Activated CD8-positive, alpha-beta T cell treated with anti-CD3 and anti-CD28 coated beads for 36 hours (primary cell): ENCODE measurements at regions of chr14 and their contacts with region 1.

Region 1: GRCh38 chr14:20855652-20856291 is 35.4 kb upstream of the RNASE3 start:
- DNase-seq: peak; percentile 50
- ATAC-seq: peak; percentile 87
- H3K4me3 Mint-ChIP-seq: no peak overlapping the region
- H3K27ac Mint-ChIP-seq: no peak overlapping the region
- H3K4me1 Mint-ChIP-seq: no peaks in the 10 kb centered on the region
- H3K27me3 Mint-ChIP-seq: peaks cover 13% of the 10 kb centered on the region
- CTCF ChIP-seq: peak; percentile 68

Region 2: DNA sequence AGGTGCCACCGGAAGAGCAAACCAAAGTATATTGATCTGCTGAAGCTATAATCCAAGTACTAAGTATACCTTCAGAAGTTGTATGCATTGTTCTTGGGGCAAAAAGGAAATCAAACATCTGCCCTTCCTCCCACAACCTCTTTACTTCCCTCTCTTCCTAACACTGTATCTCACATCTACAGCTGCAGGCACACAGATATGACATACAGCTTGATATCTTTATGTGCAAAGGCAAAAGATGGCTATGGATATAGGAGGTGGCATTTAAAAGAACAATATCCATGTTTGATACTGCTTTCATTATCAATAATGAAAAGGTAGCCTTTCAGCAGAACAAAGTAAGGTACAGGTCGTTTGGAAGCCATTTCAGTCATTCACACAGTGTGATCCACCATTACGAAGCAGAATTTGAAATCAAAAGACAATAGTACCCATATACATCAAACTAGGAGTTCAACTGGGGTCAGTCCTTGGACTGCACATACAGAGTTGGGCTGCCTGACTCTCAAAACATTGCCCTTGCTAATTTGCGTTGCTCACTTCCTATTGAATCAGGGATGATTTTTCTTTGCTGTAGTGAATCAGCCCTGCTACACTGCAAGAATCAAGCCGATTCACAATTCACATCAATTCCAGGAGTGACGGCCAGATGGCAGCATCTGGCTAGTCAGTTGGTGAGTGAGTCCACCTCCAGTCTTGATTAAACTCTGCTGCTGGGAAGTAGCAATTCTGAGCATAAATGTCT is 158.3 kb before region 1 on chr14:
- CTCF ChIA-PET with region 1: interaction called, 40 read pairs
- POLR2A ChIA-PET with region 1: no interaction called
- intact Hi-C with region 1: loop called (anchors 1 kb)
- DNase-seq: peak; percentile 78
- ATAC-seq: peak; percentile 93
- H3K4me3 Mint-ChIP-seq: no peak overlapping the region
- H3K27ac Mint-ChIP-seq: no peak overlapping the region
- H3K4me1 Mint-ChIP-seq: peaks cover under 1% of the 10 kb centered on the region
- H3K27me3 Mint-ChIP-seq: peaks cover 4% of the 10 kb centered on the region
- CTCF ChIP-seq: peak; percentile 75

Region 3: DNA sequence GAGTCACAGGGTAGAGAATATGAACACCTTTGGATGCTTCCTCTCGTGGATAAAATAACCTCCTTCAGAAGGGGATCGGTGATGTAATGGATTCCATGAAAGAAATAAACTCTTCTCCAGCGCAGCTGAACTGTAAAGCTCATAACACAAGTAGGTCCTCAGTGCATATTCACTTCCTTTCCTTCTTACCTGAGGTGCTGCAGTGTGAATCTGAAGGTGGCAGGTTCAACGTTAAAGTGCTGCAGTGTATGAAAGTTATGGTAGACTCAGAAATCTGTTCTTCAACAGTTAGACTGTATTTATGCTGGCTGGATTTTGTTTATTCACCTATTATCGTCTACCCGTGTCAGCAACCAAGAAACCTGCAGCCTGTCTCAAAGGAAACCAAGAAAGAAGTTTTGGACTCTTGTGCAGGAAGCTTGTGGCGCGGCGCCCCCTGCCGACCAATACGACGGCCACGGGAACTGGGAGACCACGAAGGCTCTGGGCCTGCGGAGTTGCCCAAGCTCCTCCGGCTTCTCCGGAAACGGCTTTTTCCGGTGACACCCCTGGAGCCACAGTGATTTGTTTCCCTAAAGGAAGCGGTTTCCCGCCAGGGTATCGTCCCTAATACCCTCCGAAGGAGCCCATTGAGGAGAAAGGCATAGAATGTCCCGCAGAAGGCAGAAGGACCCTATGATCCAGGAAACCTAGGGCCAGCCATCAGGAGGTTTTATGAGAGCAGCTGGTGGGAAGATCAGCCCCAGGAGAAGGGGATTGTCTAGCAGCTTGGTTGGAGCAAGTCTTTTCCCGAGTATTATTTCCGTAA is 17.8 kb after region 1 on chr14:
- CTCF ChIA-PET with region 1: interaction called, 89 read pairs
- POLR2A ChIA-PET with region 1: no interaction called
- intact Hi-C with region 1: no loop called
- DNase-seq: peak; percentile 93
- ATAC-seq: peak; percentile 98
- H3K4me3 Mint-ChIP-seq: peak overlapping the region; percentile 41
- H3K27ac Mint-ChIP-seq: no peak overlapping the region
- H3K4me1 Mint-ChIP-seq: peaks cover 9% of the 10 kb centered on the region
- H3K27me3 Mint-ChIP-seq: peaks cover 4% of the 10 kb centered on the region
- CTCF ChIP-seq: peak; percentile 73

Region 4: DNA sequence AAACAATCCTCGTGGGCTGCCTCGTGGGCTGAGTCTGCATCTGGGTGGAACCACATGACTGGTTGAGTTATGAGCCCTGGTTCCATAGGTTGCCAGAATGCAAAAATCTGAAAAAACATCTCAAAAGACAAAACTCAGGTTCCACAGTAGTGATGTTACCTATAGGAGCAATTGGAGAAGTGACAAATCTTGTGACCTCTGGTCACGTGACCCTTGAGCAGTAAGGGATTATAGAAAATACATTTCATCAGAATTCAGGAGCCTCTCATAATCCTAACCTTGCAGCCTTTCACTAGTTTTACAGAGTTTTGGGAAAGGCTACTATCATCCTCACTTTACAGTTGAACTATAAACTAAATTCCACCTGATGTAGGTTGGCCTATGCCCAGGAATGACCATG is 22.9 kb after region 1 on chr14:
- CTCF ChIA-PET with region 1: interaction called, 89 read pairs
- POLR2A ChIA-PET with region 1: no interaction called
- intact Hi-C with region 1: no loop called
- DNase-seq: no peak
- ATAC-seq: no peak
- H3K4me3 Mint-ChIP-seq: no peak overlapping the region
- H3K27ac Mint-ChIP-seq: no peak overlapping the region
- H3K4me1 Mint-ChIP-seq: peaks cover 7% of the 10 kb centered on the region
- H3K27me3 Mint-ChIP-seq: no peaks in the 10 kb centered on the region
- CTCF ChIP-seq: no peak

Region 5: GRCh38 chr14:20956376-20956976 is 100.7 kb after region 1 on chr14:
- CTCF ChIA-PET with region 1: interaction called, 19 read pairs
- POLR2A ChIA-PET with region 1: no interaction called
- intact Hi-C with region 1: no loop called
- DNase-seq: no peak
- ATAC-seq: peak; percentile 17
- H3K4me3 Mint-ChIP-seq: no peak overlapping the region
- H3K27ac Mint-ChIP-seq: no peak overlapping the region
- H3K4me1 Mint-ChIP-seq: peaks cover 15% of the 10 kb centered on the region
- H3K27me3 Mint-ChIP-seq: peaks cover 17% of the 10 kb centered on the region
- CTCF ChIP-seq: no peak